ENCODE measurements at regions of chr19 and their contacts with region 1.

Region 1: GRCh38 chr19:34639491-34640085 is 37.4 kb downstream of the SCGB2B2 start:
- DNase-seq: peak; percentile 13
- ATAC-seq: peak; percentile 72
- H3K4me3 ChIP-seq: no peak overlapping the region
- H3K27ac ChIP-seq: no peak overlapping the region
- H3K4me1 ChIP-seq: no peaks in the 10 kb centered on the region
- H3K27me3 ChIP-seq: no peaks in the 10 kb centered on the region
- CTCF ChIP-seq: peak; percentile 75 to 76 (median 76)
- EP300 ChIP-seq: no peak
- POLR2A ChIP-seq: no peak
- RAD21 ChIP-seq: peak; percentile 80

Region 2: DNA sequence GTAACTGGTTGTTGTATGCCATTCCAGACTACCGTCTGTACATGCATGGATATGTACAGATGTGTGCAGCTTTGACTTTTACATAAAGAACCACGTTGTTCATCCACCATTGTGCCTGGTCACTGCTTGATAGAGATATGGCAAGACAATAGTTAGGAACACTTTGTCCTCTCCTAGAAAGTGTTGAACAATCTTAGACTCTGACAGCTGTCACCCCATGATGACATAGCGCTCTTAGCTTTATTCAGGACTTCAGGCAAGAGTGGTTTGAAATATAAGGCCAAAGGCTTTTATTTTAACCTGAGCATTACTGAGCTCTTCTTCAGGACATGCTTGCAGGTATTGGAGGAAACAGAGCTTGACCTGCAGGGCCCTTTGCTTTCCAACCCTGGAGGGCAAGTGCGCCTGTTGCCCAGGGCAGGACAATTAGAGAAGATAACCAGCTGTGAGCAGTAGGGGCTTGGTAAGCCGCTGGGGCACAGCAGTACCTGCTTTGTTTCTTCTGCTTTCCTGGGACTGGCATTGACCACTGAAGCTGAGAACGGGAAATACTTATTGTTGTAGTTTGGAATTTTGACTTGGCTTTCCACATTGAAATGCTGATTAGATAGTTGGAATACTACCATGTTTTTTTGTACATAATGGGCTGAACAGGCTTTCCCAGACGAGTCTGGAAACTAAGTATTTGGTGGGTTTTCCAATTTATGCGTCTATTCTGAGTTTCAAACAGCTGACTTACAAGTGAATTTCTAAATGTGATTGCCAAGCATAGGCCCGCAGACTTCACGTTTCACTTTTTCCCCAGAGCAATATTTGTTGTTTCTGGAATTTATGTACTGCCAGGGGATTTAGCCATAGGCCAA is 334.1 kb before region 1 on chr19:
- CTCF ChIA-PET with region 1: no interaction called
- POLR2A ChIA-PET with region 1: no interaction called
- RAD21 ChIA-PET with region 1: no interaction called
- SMC1A ChIA-PET with region 1: no interaction called
- in situ Hi-C with region 1: no loop called
- intact Hi-C with region 1: no loop called
- DNase-seq: no peak
- ATAC-seq: no peak
- H3K4me3 ChIP-seq: no peak overlapping the region
- H3K27ac ChIP-seq: no peak overlapping the region
- H3K4me1 ChIP-seq: peaks cover 15% of the 10 kb centered on the region
- H3K27me3 ChIP-seq: no peaks in the 10 kb centered on the region
- CTCF ChIP-seq: no peak
- EP300 ChIP-seq: no peak
- POLR2A ChIP-seq: no peak
- RAD21 ChIP-seq: no peak

Region 3: DNA sequence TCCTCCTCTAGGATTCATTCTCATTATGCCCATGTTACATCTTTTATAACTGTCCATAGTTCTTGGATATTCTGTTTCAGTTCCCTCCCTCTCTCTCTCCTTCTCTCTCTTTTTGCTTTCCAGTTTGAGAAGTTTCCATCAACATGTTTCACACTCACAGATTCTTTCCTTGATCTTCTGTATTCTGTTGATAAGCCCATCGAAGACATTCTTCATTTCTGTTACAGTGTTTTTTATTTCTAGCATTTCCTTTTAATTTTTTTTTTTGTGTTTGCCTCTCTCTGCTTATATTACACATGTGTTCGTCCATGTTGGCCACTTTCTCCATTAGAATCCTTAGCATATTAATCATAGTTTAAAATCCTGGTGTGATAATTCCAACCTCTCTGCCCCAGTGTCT is 89.8 kb before region 1 on chr19:
- CTCF ChIA-PET with region 1: no interaction called
- POLR2A ChIA-PET with region 1: no interaction called
- RAD21 ChIA-PET with region 1: no interaction called
- SMC1A ChIA-PET with region 1: no interaction called
- in situ Hi-C with region 1: no loop called
- intact Hi-C with region 1: no loop called
- DNase-seq: no peak
- ATAC-seq: no peak
- H3K4me3 ChIP-seq: no peak overlapping the region
- H3K27ac ChIP-seq: no peak overlapping the region
- H3K4me1 ChIP-seq: no peaks in the 10 kb centered on the region
- H3K27me3 ChIP-seq: no peaks in the 10 kb centered on the region
- CTCF ChIP-seq: no peak
- EP300 ChIP-seq: no peak
- POLR2A ChIP-seq: no peak
- RAD21 ChIP-seq: no peak

Region 4: DNA sequence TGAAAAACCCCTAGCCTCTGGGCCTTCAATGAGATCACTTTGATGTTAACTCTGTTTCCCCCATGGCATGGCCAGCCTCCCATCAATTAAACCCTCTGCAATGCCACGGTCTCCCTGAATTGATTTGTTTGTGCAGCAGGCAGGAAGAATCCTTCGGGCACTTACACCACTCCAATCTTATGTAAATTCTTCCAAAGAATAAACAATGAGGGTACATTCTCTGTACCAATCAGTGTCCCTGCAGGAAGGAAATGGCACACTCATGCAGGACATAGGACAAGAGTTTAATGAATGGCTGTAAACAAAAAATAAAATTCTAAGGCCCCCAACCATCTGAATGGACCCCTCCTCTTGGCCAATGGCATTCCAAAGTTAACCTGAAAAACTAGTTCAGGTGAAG is 15.2 kb after region 1 on chr19:
- CTCF ChIA-PET with region 1: interaction called, 17 read pairs
- POLR2A ChIA-PET with region 1: no interaction called
- RAD21 ChIA-PET with region 1: no interaction called
- SMC1A ChIA-PET with region 1: interaction called, 8 read pairs
- in situ Hi-C with region 1: no loop called
- intact Hi-C with region 1: no loop called
- DNase-seq: no peak
- ATAC-seq: no peak
- H3K4me3 ChIP-seq: no peak overlapping the region
- H3K27ac ChIP-seq: no peak overlapping the region
- H3K4me1 ChIP-seq: no peaks in the 10 kb centered on the region
- H3K27me3 ChIP-seq: no peaks in the 10 kb centered on the region
- CTCF ChIP-seq: no peak
- EP300 ChIP-seq: no peak
- POLR2A ChIP-seq: no peak
- RAD21 ChIP-seq: no peak

Region 5: GRCh38 chr19:34662919-34663318 is 23.3 kb after region 1 on chr19:
- CTCF ChIA-PET with region 1: interaction called, 11 read pairs
- POLR2A ChIA-PET with region 1: no interaction called
- RAD21 ChIA-PET with region 1: interaction called, 4 read pairs
- SMC1A ChIA-PET with region 1: interaction called, 13 read pairs
- in situ Hi-C with region 1: no loop called
- intact Hi-C with region 1: no loop called
- DNase-seq: no peak
- ATAC-seq: peak; percentile 96
- H3K4me3 ChIP-seq: no peak overlapping the region
- H3K27ac ChIP-seq: no peak overlapping the region
- H3K4me1 ChIP-seq: no peaks in the 10 kb centered on the region
- H3K27me3 ChIP-seq: no peaks in the 10 kb centered on the region
- CTCF ChIP-seq: peak; percentile 39 to 48 (median 42); a peak in 4 of 6 replicates
- EP300 ChIP-seq: no peak
- POLR2A ChIP-seq: no peak
- RAD21 ChIP-seq: peak; percentile 25; the same call in 1 of the 2 replicates

Measured in GM12878 (cell line).